Activated CD4-positive, alpha-beta memory T cell treated with anti-CD3 and anti-CD28 coated beads, Interleukin-2, amount 10 ng/mL, durations not matched to agents 7 days and 5 days (primary cell): ENCODE measurements at regions of chr3 and their contacts with region 1.

Region 1: GRCh38 chr3:45929042-45929679 is 14.1 kb upstream of the CXCR6 start:
- DNase-seq: peak; percentile 71
- H3K4me3 Mint-ChIP-seq: no peak overlapping the region
- H3K27ac Mint-ChIP-seq: no peak overlapping the region
- H3K4me1 Mint-ChIP-seq: peaks cover 5% of the 10 kb centered on the region
- H3K27me3 Mint-ChIP-seq: no peaks in the 10 kb centered on the region

Region 2: DNA sequence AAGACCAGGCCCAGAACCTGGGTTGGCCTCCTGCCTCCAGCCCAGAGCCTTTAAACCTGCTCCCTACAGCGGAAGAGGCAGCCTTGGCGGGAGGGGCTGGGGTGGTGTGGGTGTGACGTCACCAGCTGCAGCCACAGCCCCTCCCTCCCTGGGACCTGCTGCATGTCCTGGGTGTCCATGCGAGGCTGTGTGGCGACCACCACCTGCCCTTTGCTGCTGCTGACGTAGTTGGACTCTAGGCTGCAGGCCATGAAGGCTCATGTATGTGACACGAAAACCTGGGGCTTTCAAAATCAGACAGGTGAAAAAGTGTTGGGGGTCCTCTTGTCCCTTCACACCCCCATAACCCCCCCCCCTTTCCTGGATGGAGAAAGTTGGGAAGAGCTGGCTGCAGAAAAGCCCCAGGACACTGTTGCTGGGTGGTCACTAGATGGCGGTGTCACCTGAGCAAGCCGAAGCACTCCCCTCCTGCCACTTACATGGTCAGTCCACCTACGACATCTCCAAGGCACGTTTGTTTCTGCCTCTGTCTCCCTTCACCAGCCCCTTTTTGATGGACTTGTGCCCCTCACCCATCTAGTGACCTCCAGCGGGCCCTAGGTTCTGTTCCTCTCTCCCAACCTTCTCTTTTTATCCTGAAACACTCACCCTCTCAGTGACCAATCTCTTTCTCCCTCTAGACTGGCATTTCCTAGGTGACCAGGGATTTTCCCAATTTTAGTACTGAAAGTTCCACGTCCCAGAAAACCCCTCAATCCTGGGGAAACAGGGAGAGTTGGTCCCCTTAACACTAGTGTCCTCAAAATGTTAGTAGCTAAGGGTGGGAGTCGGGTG is 168.1 kb before region 1 on chr3:
- CTCF ChIA-PET with region 1: interaction called, 60 read pairs
- POLR2A ChIA-PET with region 1: interaction called, 5 read pairs
- DNase-seq: peak; percentile 49
- H3K4me3 Mint-ChIP-seq: no peak overlapping the region
- H3K27ac Mint-ChIP-seq: no peak overlapping the region
- H3K4me1 Mint-ChIP-seq: no peaks in the 10 kb centered on the region
- H3K27me3 Mint-ChIP-seq: peaks cover 10% of the 10 kb centered on the region

Region 3: DNA sequence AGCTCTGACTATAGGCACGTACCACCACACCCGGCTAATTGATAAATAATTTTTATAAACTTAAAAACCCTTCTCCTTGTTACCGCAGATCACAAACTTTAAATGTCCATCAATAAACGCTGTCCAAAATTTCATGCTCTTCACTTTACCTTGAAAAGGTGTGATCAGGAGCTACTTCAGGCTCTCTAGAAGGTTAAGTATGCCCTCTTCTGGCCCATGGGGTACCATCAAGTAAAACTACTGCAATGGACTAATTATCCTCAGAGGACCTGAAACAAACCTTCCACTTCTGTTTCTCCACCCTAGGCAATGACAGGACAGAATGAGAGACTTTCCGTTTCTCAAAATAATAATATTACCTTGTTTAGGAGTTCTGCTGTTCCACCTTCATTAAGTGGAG is 96.5 kb before region 1 on chr3:
- CTCF ChIA-PET with region 1: interaction called, 10 read pairs
- POLR2A ChIA-PET with region 1: no interaction called
- DNase-seq: no peak
- H3K4me3 Mint-ChIP-seq: no peak overlapping the region
- H3K27ac Mint-ChIP-seq: no peak overlapping the region
- H3K4me1 Mint-ChIP-seq: peaks cover 2% of the 10 kb centered on the region
- H3K27me3 Mint-ChIP-seq: no peaks in the 10 kb centered on the region